PC-3 (cell line): ENCODE measurements at regions of chr20 and their contacts with region 1.

Region 1: DNA sequence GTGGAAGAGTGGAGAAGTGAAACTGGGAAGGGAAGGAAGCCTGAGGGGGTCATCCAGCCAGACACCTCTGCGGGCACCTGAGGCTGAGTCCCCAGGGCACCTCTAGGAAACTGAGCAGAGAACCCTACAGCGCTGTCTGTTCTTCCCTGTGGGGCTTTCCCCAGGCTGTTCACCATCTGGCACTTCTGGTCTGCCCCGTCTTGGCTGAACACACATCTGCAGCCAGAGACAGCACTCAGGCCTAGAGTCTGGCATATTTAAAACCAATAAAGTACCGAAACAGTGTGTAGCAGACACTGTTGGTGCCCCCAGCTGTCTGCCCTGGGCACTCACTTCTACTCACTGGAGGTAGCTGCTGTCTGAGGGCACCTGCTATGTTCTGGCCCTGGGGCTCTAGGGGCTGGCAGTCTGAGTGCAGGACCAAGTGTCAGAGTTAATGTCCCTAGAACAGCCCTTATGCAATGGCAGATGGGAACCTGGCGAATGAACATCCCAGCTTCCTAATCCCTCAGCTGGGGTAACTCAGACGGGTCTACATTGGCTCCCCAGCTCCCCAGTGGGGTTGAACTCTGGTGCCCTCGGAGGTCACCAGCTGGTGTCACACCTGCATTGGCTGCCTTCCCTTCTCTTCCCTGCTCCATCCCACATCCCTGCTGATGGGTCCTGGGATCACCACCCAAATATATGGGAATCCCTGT is 9.3 kb upstream of the ARFGEF2 start:
- DNase-seq: no peak
- ATAC-seq: peak; percentile 35; the same call in 1 of the 2 replicates
- H3K4me3 ChIP-seq: no peak overlapping the region
- H3K27ac ChIP-seq: no peak overlapping the region
- H3K4me1 ChIP-seq: no peaks in the 10 kb centered on the region
- H3K27me3 ChIP-seq: no peaks in the 10 kb centered on the region
- CTCF ChIP-seq: no peak

Region 2: DNA sequence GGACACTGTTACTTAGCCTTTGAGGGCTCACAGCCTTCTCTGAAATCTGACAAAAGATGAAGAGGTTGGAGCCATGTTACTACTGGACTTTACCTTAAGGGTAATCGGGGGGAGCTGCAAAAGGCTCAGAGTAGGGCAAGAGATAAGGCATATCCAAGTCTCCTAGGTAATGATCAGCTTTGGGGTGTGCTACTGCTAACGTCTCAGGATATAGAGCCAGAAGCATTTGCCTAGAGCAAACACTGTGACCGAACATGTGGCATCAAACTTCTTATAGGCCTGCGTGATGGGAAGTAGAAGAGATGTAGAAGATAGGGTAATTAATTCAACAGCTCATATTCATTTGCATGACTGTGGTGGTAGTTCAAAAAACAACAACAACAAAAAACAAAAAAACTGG is 1189.7 kb after region 1 on chr20:
- CTCF ChIA-PET with region 1: no interaction called
- POLR2A ChIA-PET with region 1: interaction called, 17 read pairs
- intact Hi-C with region 1: no loop called
- DNase-seq: no peak
- ATAC-seq: no peak
- H3K4me3 ChIP-seq: no peak overlapping the region
- H3K27ac ChIP-seq: no peak overlapping the region
- H3K4me1 ChIP-seq: peaks cover 16% of the 10 kb centered on the region
- H3K27me3 ChIP-seq: no peaks in the 10 kb centered on the region
- CTCF ChIP-seq: no peak